ENCODE measurements at regions of chr20 and their contacts with region 1.

Region 1: GRCh38 chr20:4592316-4593148 is 129.2 kb upstream of the PRND start:
- DNase-seq: peak; percentile 81
- ATAC-seq: peak; percentile 96
- H3K4me3 ChIP-seq: peak overlapping the region; percentile 45 to 69 (median 47)
- H3K27ac ChIP-seq: no peak overlapping the region
- H3K4me1 ChIP-seq: peaks cover 22% of the 10 kb centered on the region
- H3K27me3 ChIP-seq: peaks cover 0 to 22% of the 10 kb centered on the region in 2 experiments; a peak in 2 of 5 replicates
- CTCF ChIP-seq: peak; percentile 96
- EP300 ChIP-seq: peak in 1 of 2 experiments; percentile 63; a peak in 2 of 4 replicates
- POLR2A ChIP-seq: no peak
- RAD21 ChIP-seq: peak; percentile 100

Region 2: GRCh38 chr20:4227085-4227821 is 365.3 kb before region 1 on chr20:
- CTCF ChIA-PET with region 1: interaction called, 10 read pairs
- POLR2A ChIA-PET with region 1: no interaction called
- in situ Hi-C with region 1: no loop called
- intact Hi-C with region 1: no loop called
- DNase-seq: peak; percentile 68
- ATAC-seq: peak; percentile 78
- H3K4me3 ChIP-seq: no peak overlapping the region
- H3K27ac ChIP-seq: no peak overlapping the region
- H3K4me1 ChIP-seq: peaks cover 63% of the 10 kb centered on the region
- H3K27me3 ChIP-seq: no peaks in the 10 kb centered on the region
- CTCF ChIP-seq: peak; percentile 67
- EP300 ChIP-seq: no peak
- POLR2A ChIP-seq: no peak
- RAD21 ChIP-seq: peak; percentile 46

Region 3: DNA sequence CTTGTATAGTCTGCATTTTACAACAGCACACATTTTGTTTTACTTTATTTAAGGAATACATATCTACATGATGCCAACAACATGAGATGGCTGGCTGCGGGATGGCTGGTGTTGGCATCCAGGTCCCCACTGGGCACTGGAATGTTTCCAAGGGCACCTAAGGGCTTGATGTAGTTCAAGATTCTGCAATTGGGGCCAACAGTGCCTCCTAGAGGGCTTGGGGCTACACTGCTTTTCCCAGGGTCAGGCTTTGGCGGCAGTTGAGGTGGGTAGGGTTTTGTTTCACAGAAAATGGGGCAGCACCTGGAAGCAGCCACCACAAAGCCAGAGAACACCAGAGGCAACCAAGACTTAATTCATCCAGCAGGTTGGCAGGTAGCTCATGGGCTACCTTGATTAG is 73.0 kb before region 1 on chr20:
- CTCF ChIA-PET with region 1: no interaction called
- POLR2A ChIA-PET with region 1: no interaction called
- in situ Hi-C with region 1: no loop called
- intact Hi-C with region 1: loop called (anchors 1 kb)
- DNase-seq: no peak
- ATAC-seq: peak; percentile 57; the same call in 2 of the 3 replicates
- H3K4me3 ChIP-seq: no peak overlapping the region
- H3K27ac ChIP-seq: no peak overlapping the region
- H3K4me1 ChIP-seq: no peaks in the 10 kb centered on the region
- H3K27me3 ChIP-seq: 0 out of 5 replicates have a peak, but pooled peaks cover 0 to 2% of the 10 kb centered on the region in 2 experiments
- CTCF ChIP-seq: peak; percentile 56
- EP300 ChIP-seq: no peak
- POLR2A ChIP-seq: no peak
- RAD21 ChIP-seq: 0 out of 2 replicates have a peak, but pooled peaks have one; percentile 15

Region 4: GRCh38 chr20:4726710-4727397 is 134.3 kb after region 1 on chr20:
- CTCF ChIA-PET with region 1: no interaction called
- POLR2A ChIA-PET with region 1: no interaction called
- in situ Hi-C with region 1: no loop called
- intact Hi-C with region 1: no loop called
- DNase-seq: no peak
- ATAC-seq: no peak
- H3K4me3 ChIP-seq: no peak overlapping the region
- H3K27ac ChIP-seq: no peak overlapping the region
- H3K4me1 ChIP-seq: no peaks in the 10 kb centered on the region
- H3K27me3 ChIP-seq: peaks cover 8 to 37% of the 10 kb centered on the region in 2 experiments; a peak in 3 of 5 replicates
- CTCF ChIP-seq: no peak
- EP300 ChIP-seq: no peak
- POLR2A ChIP-seq: no peak
- RAD21 ChIP-seq: no peak